HCT116 (cell line): ENCODE measurements at regions of chr22 and their contacts with region 1.

Region 1: GRCh38 chr22:46542011-46542985 is 4.9 kb upstream of the CELSR1 start:
- DNase-seq: no peak
- ATAC-seq: peak; percentile 89
- H3K4me3 ChIP-seq: no peak overlapping the region
- H3K27ac ChIP-seq: no peak overlapping the region
- H3K4me1 ChIP-seq: peaks cover 10 to 31% of the 10 kb centered on the region in 2 experiments
- H3K27me3 ChIP-seq: no peaks in the 10 kb centered on the region
- CTCF ChIP-seq: peak; percentile 87 to 96 (median 94)
- POLR2A ChIP-seq: no peak
- RAD21 ChIP-seq: peak; percentile 96

Region 2: DNA sequence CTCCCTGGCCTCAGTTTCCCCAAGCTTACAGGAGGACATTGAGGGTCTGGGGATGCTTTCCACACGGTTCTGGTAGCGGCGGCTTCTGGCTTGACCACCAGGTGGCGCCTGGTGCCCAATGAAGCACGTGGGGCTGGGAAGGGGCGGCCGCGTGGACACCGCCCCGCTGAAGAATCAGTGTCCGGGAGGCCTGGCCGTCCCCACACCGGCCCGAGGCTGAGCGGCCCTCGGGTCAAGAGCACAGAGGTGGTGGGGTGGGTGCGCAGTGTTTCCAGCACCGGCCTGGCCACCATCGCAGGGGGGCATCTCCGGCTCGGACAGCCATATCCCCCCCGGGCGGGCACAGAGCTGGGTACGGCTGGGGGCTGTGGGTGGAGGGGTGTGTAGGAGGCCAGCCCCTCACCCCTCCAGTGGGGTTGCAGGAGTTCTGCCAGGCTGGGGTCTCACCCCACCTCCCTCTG is 419.8 kb before region 1 on chr22:
- CTCF ChIA-PET with region 1: interaction called, 4 read pairs
- POLR2A ChIA-PET with region 1: no interaction called
- RAD21 ChIA-PET with region 1: no interaction called
- intact Hi-C with region 1: loop called (anchors 2 kb)
- DNase-seq: peak; percentile 8
- ATAC-seq: peak; percentile 88
- H3K4me3 ChIP-seq: no peak overlapping the region
- H3K27ac ChIP-seq: no peak overlapping the region
- H3K4me1 ChIP-seq: peaks cover 0 to 21% of the 10 kb centered on the region in 2 experiments; a peak in 1 of 4 replicates
- H3K27me3 ChIP-seq: no peaks in the 10 kb centered on the region
- CTCF ChIP-seq: peak; percentile 88 to 94 (median 92)
- POLR2A ChIP-seq: no peak
- RAD21 ChIP-seq: peak; percentile 97

Region 3: GRCh38 chr22:46355371-46355995 is 186.8 kb before region 1 on chr22:
- CTCF ChIA-PET with region 1: interaction called, 17 read pairs
- POLR2A ChIA-PET with region 1: no interaction called
- RAD21 ChIA-PET with region 1: interaction called in 1 of 2 experiments, 7 read pairs
- intact Hi-C with region 1: loop called (anchors 1 kb)
- DNase-seq: no peak
- ATAC-seq: peak; percentile 79
- H3K4me3 ChIP-seq: no peak overlapping the region
- H3K27ac ChIP-seq: no peak overlapping the region; the same call in 1 of the 2 replicates
- H3K4me1 ChIP-seq: peaks cover 13 to 14% of the 10 kb centered on the region in 2 experiments
- H3K27me3 ChIP-seq: no peaks in the 10 kb centered on the region
- CTCF ChIP-seq: peak; percentile 73 to 91 (median 85)
- POLR2A ChIP-seq: no peak
- RAD21 ChIP-seq: peak; percentile 92

Region 4: GRCh38 chr22:46367707-46368191 is 174.5 kb before region 1 on chr22:
- CTCF ChIA-PET with region 1: interaction called, 146 read pairs
- POLR2A ChIA-PET with region 1: interaction called, 15 read pairs
- RAD21 ChIA-PET with region 1: interaction called, 21 to 31 read pairs
- intact Hi-C with region 1: loop called (anchors 1 kb)
- DNase-seq: peak; percentile 29
- ATAC-seq: peak; percentile 94
- H3K4me3 ChIP-seq: no peak overlapping the region
- H3K27ac ChIP-seq: no peak overlapping the region
- H3K4me1 ChIP-seq: peaks cover 0 to 12% of the 10 kb centered on the region in 2 experiments; a peak in 2 of 4 replicates
- H3K27me3 ChIP-seq: no peaks in the 10 kb centered on the region
- CTCF ChIP-seq: peak; percentile 85 to 96 (median 90)
- POLR2A ChIP-seq: no peak
- RAD21 ChIP-seq: peak; percentile 93

Region 5: DNA sequence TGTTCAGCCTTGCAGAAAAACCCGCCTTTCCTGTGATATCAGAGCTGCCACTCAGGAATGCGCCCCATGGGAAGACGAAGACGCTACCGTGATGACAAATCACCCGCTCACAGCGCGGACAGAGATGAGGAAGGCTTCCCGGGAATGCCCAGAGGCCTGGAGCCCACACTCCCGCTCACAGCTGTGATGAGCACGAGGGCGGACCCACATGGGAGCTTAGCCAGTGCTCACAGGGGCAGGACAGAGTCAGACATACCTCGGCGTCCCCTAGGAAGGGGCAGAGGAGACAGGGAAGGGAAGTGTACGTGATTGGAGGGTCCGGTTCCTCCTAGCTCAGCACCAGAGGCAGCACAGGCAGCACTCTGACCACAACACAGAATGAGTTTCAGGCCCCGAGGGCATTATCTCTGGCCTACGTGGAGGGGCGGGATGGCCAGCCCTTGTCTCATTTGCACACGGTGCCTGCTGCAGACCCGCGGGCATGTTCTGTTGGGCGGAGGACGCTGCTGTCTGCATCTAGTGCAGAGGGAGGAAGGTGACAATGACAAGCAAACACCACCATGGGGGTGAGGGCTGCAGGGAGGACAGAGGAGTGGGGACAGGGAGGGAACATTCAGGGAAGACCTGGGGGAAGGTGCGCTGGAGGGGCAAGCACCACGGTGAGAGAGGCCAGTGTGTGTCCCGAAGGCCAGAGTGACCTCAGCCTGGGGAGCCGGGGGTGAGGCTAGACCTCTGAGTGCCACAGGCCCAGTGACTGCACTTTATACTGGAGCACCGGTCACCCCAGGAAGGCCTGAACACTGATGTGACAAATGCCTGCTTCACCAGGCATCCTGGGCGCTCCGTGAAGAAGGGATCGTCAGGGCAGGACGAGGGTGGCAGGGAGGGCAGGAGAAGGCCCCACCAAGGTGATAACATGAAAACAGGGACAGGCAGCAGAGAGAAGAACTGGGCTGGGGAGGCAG is 84.5 kb before region 1 on chr22:
- CTCF ChIA-PET with region 1: no interaction called
- POLR2A ChIA-PET with region 1: no interaction called
- RAD21 ChIA-PET with region 1: no interaction called
- intact Hi-C with region 1: loop called (anchors 10 kb)
- DNase-seq: no peak
- ATAC-seq: no peak
- H3K4me3 ChIP-seq: no peak overlapping the region
- H3K27ac ChIP-seq: no peak overlapping the region
- H3K4me1 ChIP-seq: peaks cover 29 to 82% of the 10 kb centered on the region in 2 experiments
- H3K27me3 ChIP-seq: no peaks in the 10 kb centered on the region
- CTCF ChIP-seq: no peak
- POLR2A ChIP-seq: no peak
- RAD21 ChIP-seq: no peak

Region 6: GRCh38 chr22:46491923-46492322 is 50.4 kb before region 1 on chr22:
- CTCF ChIA-PET with region 1: no interaction called
- POLR2A ChIA-PET with region 1: no interaction called
- RAD21 ChIA-PET with region 1: no interaction called
- intact Hi-C with region 1: no loop called
- DNase-seq: no peak
- ATAC-seq: no peak
- H3K4me3 ChIP-seq: no peak overlapping the region
- H3K27ac ChIP-seq: no peak overlapping the region
- H3K4me1 ChIP-seq: peaks cover 4 to 9% of the 10 kb centered on the region in 2 experiments; a peak in 2 of 4 replicates
- H3K27me3 ChIP-seq: no peaks in the 10 kb centered on the region
- CTCF ChIP-seq: no peak
- POLR2A ChIP-seq: no peak
- RAD21 ChIP-seq: no peak

Region 7: DNA sequence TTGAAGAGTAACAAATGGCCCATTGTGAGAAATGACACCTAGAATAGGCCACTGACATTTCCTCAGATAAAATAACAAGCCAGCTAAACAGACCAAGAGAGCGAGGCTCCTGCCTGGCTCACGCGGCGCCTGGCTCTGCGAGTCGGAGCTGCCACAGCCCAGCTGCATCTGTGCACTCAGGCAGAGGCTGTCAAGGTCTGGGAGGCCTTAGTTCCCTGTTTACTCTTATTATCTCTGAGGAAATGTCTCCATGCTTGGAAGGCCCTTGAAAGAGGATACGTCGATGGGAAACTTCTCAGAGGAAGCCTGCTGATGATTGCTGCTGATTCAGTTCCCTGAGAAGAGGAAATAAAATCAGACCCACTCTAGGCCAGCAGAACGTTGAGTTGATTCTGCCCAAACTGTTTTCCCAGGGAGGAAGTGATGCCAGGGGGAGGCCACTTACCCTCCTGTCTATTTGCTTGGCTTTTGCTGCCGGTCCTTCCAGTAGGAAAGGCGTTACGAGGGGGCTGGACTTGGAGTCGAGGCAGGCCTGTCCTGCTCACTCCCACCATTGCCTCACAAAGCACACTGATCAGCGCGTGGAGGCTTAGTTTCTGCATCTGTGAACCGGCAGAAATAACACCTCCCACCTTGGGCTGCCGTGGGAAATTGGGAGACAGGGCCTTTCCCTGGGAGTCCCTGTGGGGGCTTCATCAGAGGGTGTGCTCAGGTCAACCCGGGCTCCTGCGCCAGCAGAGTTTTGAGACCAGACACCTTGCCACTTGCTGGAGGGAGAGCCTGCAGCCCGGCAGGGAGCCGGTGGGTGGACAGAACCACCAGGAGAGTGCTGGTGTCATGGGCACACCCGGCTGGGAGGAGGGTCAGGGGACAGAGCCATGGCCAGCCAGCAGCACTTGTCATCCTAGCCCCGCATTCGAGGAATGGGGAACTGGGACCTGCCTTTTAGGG is 429.1 kb after region 1 on chr22:
- CTCF ChIA-PET with region 1: no interaction called
- POLR2A ChIA-PET with region 1: no interaction called
- RAD21 ChIA-PET with region 1: no interaction called
- intact Hi-C with region 1: no loop called
- DNase-seq: no peak
- ATAC-seq: no peak
- H3K4me3 ChIP-seq: no peak overlapping the region
- H3K27ac ChIP-seq: no peak overlapping the region
- H3K4me1 ChIP-seq: peaks cover 5 to 9% of the 10 kb centered on the region in 2 experiments; a peak in 1 of 4 replicates
- H3K27me3 ChIP-seq: no peaks in the 10 kb centered on the region
- CTCF ChIP-seq: no peak
- POLR2A ChIP-seq: no peak
- RAD21 ChIP-seq: no peak